ENCODE measurements at regions of chr18 and their contacts with region 1.

Region 1: GRCh38 chr18:48230467-48231113 is 178.6 kb downstream of the ZBTB7C start:
- DNase-seq: no peak
- ATAC-seq: peak; percentile 92
- H3K4me3 ChIP-seq: no peak overlapping the region
- H3K27ac ChIP-seq: no peak overlapping the region
- H3K4me1 ChIP-seq: no peaks in the 10 kb centered on the region
- H3K27me3 ChIP-seq: no peaks in the 10 kb centered on the region; the same call in 1 of the 2 replicates
- CTCF ChIP-seq: peak; percentile 54

Region 2: GRCh38 chr18:47781554-47781953 is 449.0 kb before region 1 on chr18:
- CTCF ChIA-PET with region 1: no interaction called
- POLR2A ChIA-PET with region 1: no interaction called
- in situ Hi-C with region 1: no loop called
- intact Hi-C with region 1: no loop called
- DNase-seq: no peak
- ATAC-seq: no peak
- H3K4me3 ChIP-seq: no peak overlapping the region
- H3K27ac ChIP-seq: no peak overlapping the region
- H3K4me1 ChIP-seq: no peaks in the 10 kb centered on the region
- H3K27me3 ChIP-seq: no peaks in the 10 kb centered on the region
- CTCF ChIP-seq: no peak

Region 3: DNA sequence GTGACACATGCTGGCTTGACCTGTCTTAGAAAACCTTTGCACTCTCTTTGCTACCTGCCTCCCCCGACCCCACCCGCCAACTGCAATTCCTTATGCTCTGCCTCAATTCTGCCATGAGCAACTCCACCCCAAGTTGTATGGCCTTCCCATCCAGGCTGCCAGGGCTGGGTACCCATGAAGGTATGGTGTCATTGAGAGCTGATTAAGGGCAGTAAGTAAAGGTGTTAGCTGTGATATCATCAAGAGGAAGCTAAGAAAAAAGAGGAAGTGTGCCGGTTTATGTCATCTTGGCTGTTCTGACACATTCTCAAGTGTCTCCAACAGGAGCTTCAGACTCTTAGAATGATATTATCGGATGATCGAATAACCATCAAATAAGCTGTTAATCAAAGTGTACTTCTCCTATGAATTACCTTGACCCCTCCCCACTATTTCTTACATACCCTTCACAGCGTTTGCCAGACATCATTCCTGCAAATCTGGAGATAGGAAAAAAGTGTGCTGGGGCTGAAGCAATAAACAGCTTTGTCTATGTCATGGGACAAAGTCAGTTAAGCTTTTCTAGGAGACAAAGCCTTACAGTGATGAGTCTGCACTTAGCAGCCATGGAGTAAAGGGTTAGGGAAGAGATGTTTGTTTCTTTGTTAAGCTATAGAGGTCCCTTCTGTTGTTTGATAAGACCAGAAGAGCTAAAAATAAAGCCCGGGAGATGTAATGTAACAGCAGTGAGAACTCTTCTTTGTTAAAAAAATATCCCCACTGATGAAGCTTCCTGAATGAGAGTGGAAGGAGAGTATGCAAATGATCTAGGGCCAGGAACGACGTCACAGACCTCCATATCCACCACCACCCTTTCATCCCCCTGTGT is 259.7 kb before region 1 on chr18:
- CTCF ChIA-PET with region 1: no interaction called
- POLR2A ChIA-PET with region 1: no interaction called
- in situ Hi-C with region 1: no loop called
- intact Hi-C with region 1: no loop called
- DNase-seq: no peak
- ATAC-seq: no peak
- H3K4me3 ChIP-seq: no peak overlapping the region
- H3K27ac ChIP-seq: no peak overlapping the region
- H3K4me1 ChIP-seq: no peaks in the 10 kb centered on the region
- H3K27me3 ChIP-seq: peaks cover 2% of the 10 kb centered on the region; the same call in 1 of the 2 replicates
- CTCF ChIP-seq: no peak

Region 4: GRCh38 chr18:48445540-48445939 is 214.9 kb after region 1 on chr18:
- CTCF ChIA-PET with region 1: interaction called, 11 read pairs
- POLR2A ChIA-PET with region 1: no interaction called
- in situ Hi-C with region 1: no loop called
- intact Hi-C with region 1: loop called (anchors 5 kb)
- DNase-seq: peak; percentile 53
- ATAC-seq: peak; percentile 85
- H3K4me3 ChIP-seq: no peak overlapping the region
- H3K27ac ChIP-seq: no peak overlapping the region
- H3K4me1 ChIP-seq: no peaks in the 10 kb centered on the region
- H3K27me3 ChIP-seq: no peaks in the 10 kb centered on the region; the same call in none of the 2 replicates
- CTCF ChIP-seq: peak; percentile 82

Region 5: DNA sequence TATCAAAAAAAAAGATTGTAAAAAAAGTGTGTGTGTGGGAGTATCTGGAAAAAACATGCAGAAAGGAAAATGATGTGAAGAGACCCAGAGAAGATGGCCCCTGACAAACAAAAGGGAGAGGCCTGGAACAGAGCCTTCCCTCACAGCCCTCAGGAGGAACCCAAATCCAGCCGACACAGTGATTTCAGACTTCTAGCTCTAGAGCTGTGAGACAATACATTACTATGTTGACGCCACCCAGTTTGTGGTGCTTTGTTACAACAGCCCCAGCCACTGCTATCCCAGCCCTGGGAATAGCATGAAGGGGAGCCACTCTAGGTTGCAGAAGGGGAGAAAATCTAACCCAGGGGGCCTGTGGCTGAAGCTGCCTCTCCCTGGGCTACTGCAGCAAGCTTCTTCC is 237.6 kb after region 1 on chr18:
- CTCF ChIA-PET with region 1: no interaction called
- POLR2A ChIA-PET with region 1: no interaction called
- in situ Hi-C with region 1: no loop called
- intact Hi-C with region 1: loop called (anchors 5 kb)
- DNase-seq: no peak
- ATAC-seq: no peak
- H3K4me3 ChIP-seq: no peak overlapping the region
- H3K27ac ChIP-seq: no peak overlapping the region
- H3K4me1 ChIP-seq: no peaks in the 10 kb centered on the region
- H3K27me3 ChIP-seq: no peaks in the 10 kb centered on the region
- CTCF ChIP-seq: no peak

Measured in Panc1 (cell line).